ENCODE measurements at regions of chr1 and their contacts with region 1.

Region 1: DNA sequence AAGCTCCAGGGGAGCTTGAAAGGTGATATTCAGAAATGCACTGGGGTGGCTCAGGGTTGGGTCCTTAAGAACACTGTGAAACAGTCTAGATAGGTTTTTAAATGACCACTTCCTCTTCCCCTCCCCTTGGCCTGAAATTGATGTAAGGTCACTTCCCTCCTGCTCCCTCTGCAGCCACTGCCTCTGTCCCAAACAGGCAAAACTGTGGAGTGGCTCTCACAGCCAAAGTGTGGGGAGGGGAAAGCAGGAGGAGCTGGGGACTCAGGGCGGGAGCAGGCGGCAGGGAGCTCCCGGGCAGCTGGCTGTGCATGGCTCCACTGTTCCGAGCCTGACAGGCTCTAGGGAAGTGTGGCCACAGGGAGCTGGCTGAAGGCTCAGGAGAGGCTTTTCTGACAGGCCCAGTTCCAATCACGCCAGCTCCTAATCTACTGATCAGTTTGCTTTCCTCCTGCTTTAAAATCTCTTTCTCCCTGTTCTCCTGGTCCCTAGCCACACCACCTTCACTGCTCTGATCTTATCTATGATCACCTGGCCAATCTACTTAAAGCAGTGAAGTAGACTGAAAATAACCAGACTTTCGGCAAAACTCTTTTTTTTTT is 5.1 kb upstream of the CSRP1 start:
- DNase-seq: peak; percentile 89
- H3K4me3 ChIP-seq: no peak overlapping the region
- H3K27ac ChIP-seq: peak overlapping the region; percentile 81 to 98 (median 93)
- H3K4me1 ChIP-seq: peaks cover 0 to 59% (median 43%) of the 10 kb centered on the region in 4 donors
- H3K27me3 ChIP-seq: no peaks in the 10 kb centered on the region
- CTCF ChIP-seq: no peak
- EP300 ChIP-seq: no peak
- POLR2A ChIP-seq: no peak

Region 2: DNA sequence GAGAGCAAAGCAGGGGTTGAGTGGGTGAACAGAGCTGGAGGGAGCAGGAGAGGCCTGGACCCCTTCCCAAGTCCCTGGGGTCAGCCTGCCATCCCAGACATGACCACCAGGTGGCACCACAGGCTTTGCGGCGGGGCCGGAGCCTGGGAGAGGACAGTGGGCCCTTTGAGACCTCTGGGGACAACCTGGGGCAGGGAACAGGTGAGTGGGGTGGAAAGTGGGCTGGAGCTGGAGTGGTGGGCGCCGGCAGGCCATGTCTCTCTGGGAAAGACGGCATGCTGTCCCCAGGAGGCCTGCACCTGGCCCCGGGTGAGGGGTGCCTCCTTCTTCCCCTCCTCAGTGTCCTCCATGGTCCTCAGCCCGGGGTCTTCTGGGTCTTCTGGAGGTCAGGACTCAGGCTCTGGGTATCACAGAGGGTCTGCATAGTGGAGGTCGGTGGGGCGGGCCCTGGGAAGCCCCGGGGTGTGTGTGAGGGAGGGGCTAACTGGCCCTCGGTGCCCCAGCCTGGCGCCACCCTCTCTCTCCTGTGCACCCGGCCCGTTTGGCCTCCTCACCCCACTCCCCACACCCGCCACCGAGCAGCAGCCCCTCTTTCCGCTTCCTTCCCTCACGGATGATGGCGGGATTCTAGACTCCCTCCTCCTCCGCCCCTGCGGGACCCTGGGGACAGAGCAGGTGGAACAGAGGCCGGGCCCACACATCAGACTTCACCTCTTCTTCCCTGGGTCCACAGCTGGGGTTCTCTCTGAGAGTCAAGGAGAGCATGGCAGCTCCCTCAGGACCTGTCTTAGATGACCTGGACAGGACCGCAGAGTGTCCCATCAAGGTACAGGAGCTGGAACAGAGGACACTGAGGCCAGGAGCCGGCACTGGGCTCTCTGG is 257.2 kb before region 1 on chr1:
- intact Hi-C with region 1: loop called (anchors 5 kb)
- DNase-seq: no peak
- H3K4me3 ChIP-seq: no peak overlapping the region
- H3K27ac ChIP-seq: no peak overlapping the region
- H3K4me1 ChIP-seq: peaks cover 0 to 6% (median 4%) of the 10 kb centered on the region in 4 donors
- H3K27me3 ChIP-seq: peaks cover 6 to 20% (median 12%) of the 10 kb centered on the region in 3 donors
- CTCF ChIP-seq: peak; percentile 81 to 96 (median 94)
- EP300 ChIP-seq: no peak
- POLR2A ChIP-seq: no peak

Region 3: GRCh38 chr1:201433612-201434011 is 78.4 kb before region 1 on chr1:
- intact Hi-C with region 1: loop called (anchors 2 kb)
- DNase-seq: no peak
- H3K4me3 ChIP-seq: no peak overlapping the region
- H3K27ac ChIP-seq: no peak overlapping the region
- H3K4me1 ChIP-seq: peaks cover 0 to 12% (median 7%) of the 10 kb centered on the region in 4 donors
- H3K27me3 ChIP-seq: peaks cover 0 to 2% (median 0%) of the 10 kb centered on the region in 3 donors
- CTCF ChIP-seq: no peak
- EP300 ChIP-seq: no peak
- POLR2A ChIP-seq: no peak

Region 4: GRCh38 chr1:201447911-201448871 is 63.8 kb before region 1 on chr1:
- intact Hi-C with region 1: loop called (anchors 1 kb)
- DNase-seq: peak; percentile 93
- H3K4me3 ChIP-seq: no peak overlapping the region
- H3K27ac ChIP-seq: peak overlapping the region; percentile 9 to 78 (median 68)
- H3K4me1 ChIP-seq: peaks cover 0 to 35% (median 34%) of the 10 kb centered on the region in 4 donors
- H3K27me3 ChIP-seq: no peaks in the 10 kb centered on the region
- CTCF ChIP-seq: peak; percentile 78 to 92 (median 84)
- EP300 ChIP-seq: peak in 1 of 4 donors; percentile 41
- POLR2A ChIP-seq: no peak

Region 5: GRCh38 chr1:201456499-201457309 is 55.3 kb before region 1 on chr1:
- intact Hi-C with region 1: loop called (anchors 1 kb)
- DNase-seq: peak; percentile 96
- H3K4me3 ChIP-seq: no peak overlapping the region
- H3K27ac ChIP-seq: peak overlapping the region; percentile 39 to 84 (median 82)
- H3K4me1 ChIP-seq: peaks cover 0 to 56% (median 52%) of the 10 kb centered on the region in 4 donors
- H3K27me3 ChIP-seq: no peaks in the 10 kb centered on the region
- CTCF ChIP-seq: no peak
- EP300 ChIP-seq: peak in 2 of 4 donors; percentile 10 to 66
- POLR2A ChIP-seq: no peak

Region 6: DNA sequence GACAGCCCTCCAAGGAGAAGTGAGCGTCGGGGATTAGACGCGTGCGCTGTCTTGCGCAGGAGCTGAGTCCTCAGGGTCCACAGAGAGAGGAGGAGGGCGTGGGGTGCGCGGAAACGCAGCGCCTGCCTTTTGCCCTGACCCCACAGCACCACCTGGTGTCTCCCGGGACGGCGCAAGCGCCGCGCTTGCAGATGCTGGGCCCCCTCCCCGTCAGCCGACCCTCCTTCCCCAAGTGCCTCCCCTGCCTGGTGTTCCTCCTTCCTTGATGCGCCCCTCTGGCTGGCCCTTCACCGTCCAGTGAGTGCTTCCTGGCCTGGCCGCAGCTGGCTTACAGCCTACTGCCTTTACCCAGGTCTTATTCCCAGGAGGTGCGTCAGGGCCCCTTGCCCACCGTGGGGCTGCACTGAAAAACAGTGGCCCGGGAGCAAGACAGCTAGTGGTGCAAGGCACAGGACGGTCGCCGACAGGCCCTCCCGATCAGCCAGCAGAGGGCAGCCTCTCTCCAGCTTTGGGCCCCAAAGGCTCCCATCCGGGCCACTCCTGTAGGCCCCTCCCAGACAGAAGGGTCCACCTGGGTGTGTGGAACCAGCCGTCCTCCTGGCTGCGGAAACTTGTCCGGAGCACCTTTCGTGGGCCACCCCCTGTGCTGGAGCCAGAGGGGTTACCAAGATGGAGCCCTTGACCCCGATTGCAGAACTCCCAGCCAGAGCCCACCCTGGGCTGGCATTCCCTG is 30.1 kb before region 1 on chr1:
- intact Hi-C with region 1: loop called (anchors 1 kb)
- DNase-seq: peak; percentile 96
- H3K4me3 ChIP-seq: peak overlapping the region in 3 of 4 donors; percentile 27 to 36 (median 34)
- H3K27ac ChIP-seq: peak overlapping the region; percentile 92 to 98 (median 96)
- H3K4me1 ChIP-seq: peaks cover 0 to 53% (median 48%) of the 10 kb centered on the region in 4 donors
- H3K27me3 ChIP-seq: no peaks in the 10 kb centered on the region
- CTCF ChIP-seq: peak; percentile 86 to 98 (median 96)
- EP300 ChIP-seq: no peak
- POLR2A ChIP-seq: no peak